Naive thymus-derived CD4-positive, alpha-beta T cell (primary cell): ENCODE measurements at regions of chr1 and their contacts with region 1.

Region 1: GRCh38 chr1:67053785-67054772 is at the start of gene SLC35D1:
- DNase-seq: peak; percentile 65 to 88 (median 76)
- ATAC-seq: peak; percentile 86
- H3K4me3 ChIP-seq: peak within 1 kb of the TSS; percentile 87
- H3K4me3 Mint-ChIP-seq: peak within 1 kb of the TSS; percentile 90 to 97 (median 95)
- H3K27ac ChIP-seq: peak within 1 kb of the TSS; percentile 96
- H3K27ac Mint-ChIP-seq: peak within 1 kb of the TSS; percentile 80 to 99 (median 94)
- H3K4me1 ChIP-seq: peaks cover 6 to 13% of the 10 kb centered on the region in 2 donors
- H3K4me1 Mint-ChIP-seq: peaks cover 17 to 37% (median 30%) of the 10 kb centered on the region in 7 donors
- H3K27me3 ChIP-seq: no peaks in the 10 kb centered on the region
- H3K27me3 Mint-ChIP-seq: peaks cover 0 to 9% (median 0%) of the 10 kb centered on the region in 5 donors
- total RNA-seq, gene SLC35D1: 9.8 to 25.7 (median 15.4) TPM

Region 2: GRCh38 chr1:66764994-66765578 is 289.0 kb before region 1 on chr1:
- CTCF ChIA-PET with region 1: interaction called, 3 read pairs
- POLR2A ChIA-PET with region 1: interaction called, 3 read pairs
- intact Hi-C with region 1: loop called (anchors 1 to 5 kb)
- DNase-seq: peak in 7 of 9 donors; percentile 48 to 68 (median 62)
- ATAC-seq: peak; percentile 81
- H3K4me3 ChIP-seq: no peak overlapping the region
- H3K4me3 Mint-ChIP-seq: no peak overlapping the region
- H3K27ac ChIP-seq: no peak overlapping the region
- H3K27ac Mint-ChIP-seq: no peak overlapping the region
- H3K4me1 ChIP-seq: no peaks in the 10 kb centered on the region
- H3K4me1 Mint-ChIP-seq: peaks cover 7 to 21% (median 15%) of the 10 kb centered on the region in 7 donors
- H3K27me3 ChIP-seq: no peaks in the 10 kb centered on the region
- H3K27me3 Mint-ChIP-seq: peaks cover 0 to 3% (median 0%) of the 10 kb centered on the region in 5 donors

Region 3: GRCh38 chr1:66809736-66810326 is 244.2 kb before region 1 on chr1:
- CTCF ChIA-PET with region 1: no interaction called
- POLR2A ChIA-PET with region 1: no interaction called
- intact Hi-C with region 1: no loop called
- DNase-seq: no peak
- ATAC-seq: no peak
- H3K4me3 ChIP-seq: no peak overlapping the region
- H3K4me3 Mint-ChIP-seq: no peak overlapping the region
- H3K27ac ChIP-seq: no peak overlapping the region
- H3K27ac Mint-ChIP-seq: no peak overlapping the region
- H3K4me1 ChIP-seq: no peaks in the 10 kb centered on the region
- H3K4me1 Mint-ChIP-seq: no peaks in the 10 kb centered on the region
- H3K27me3 ChIP-seq: peaks cover 0 to 1% of the 10 kb centered on the region in 2 donors
- H3K27me3 Mint-ChIP-seq: peaks cover 0 to 8% (median 0%) of the 10 kb centered on the region in 5 donors

Region 4: GRCh38 chr1:66929999-66930822 is 123.9 kb before region 1 on chr1:
- CTCF ChIA-PET with region 1: no interaction called
- POLR2A ChIA-PET with region 1: interaction called, 13 read pairs
- intact Hi-C with region 1: loop called in 1 of 2 experiments (anchors 1 kb)
- DNase-seq: peak; percentile 88 to 97 (median 92)
- ATAC-seq: peak; percentile 88
- H3K4me3 ChIP-seq: peak overlapping the region; percentile 69
- H3K4me3 Mint-ChIP-seq: peak overlapping the region; percentile 85 to 98 (median 92)
- H3K27ac ChIP-seq: peak overlapping the region; percentile 91
- H3K27ac Mint-ChIP-seq: peak overlapping the region; percentile 79 to 95 (median 90)
- H3K4me1 ChIP-seq: peaks cover 45 to 48% of the 10 kb centered on the region in 2 donors
- H3K4me1 Mint-ChIP-seq: peaks cover 38 to 88% (median 70%) of the 10 kb centered on the region in 7 donors
- H3K27me3 ChIP-seq: no peaks in the 10 kb centered on the region
- H3K27me3 Mint-ChIP-seq: no peaks in the 10 kb centered on the region

Region 5: GRCh38 chr1:66996018-66996682 is 57.9 kb before region 1 on chr1:
- CTCF ChIA-PET with region 1: no interaction called
- POLR2A ChIA-PET with region 1: no interaction called
- intact Hi-C with region 1: loop called (anchors 1 kb)
- DNase-seq: peak; percentile 14 to 75 (median 63)
- ATAC-seq: peak; percentile 93
- H3K4me3 ChIP-seq: no peak overlapping the region
- H3K4me3 Mint-ChIP-seq: no peak overlapping the region
- H3K27ac ChIP-seq: no peak overlapping the region
- H3K27ac Mint-ChIP-seq: peak overlapping the region in 5 of 9 donors; percentile 7 to 78 (median 74)
- H3K4me1 ChIP-seq: peaks cover 0 to 5% of the 10 kb centered on the region in 2 donors
- H3K4me1 Mint-ChIP-seq: peaks cover 4 to 24% (median 23%) of the 10 kb centered on the region in 7 donors
- H3K27me3 ChIP-seq: no peaks in the 10 kb centered on the region
- H3K27me3 Mint-ChIP-seq: no peaks in the 10 kb centered on the region

Region 6: GRCh38 chr1:67142931-67143330 is 88.9 kb after region 1 on chr1:
- CTCF ChIA-PET with region 1: interaction called, 8 read pairs
- POLR2A ChIA-PET with region 1: interaction called, 16 read pairs
- intact Hi-C with region 1: loop called (anchors 1 to 2 kb)
- DNase-seq: peak in 7 of 9 donors; percentile 18 to 77 (median 66)
- ATAC-seq: peak; percentile 80
- H3K4me3 ChIP-seq: no peak overlapping the region
- H3K4me3 Mint-ChIP-seq: peak overlapping the region; percentile 9 to 81 (median 52)
- H3K27ac ChIP-seq: peak overlapping the region; percentile 38
- H3K27ac Mint-ChIP-seq: peak overlapping the region; percentile 3 to 95 (median 86)
- H3K4me1 ChIP-seq: peaks cover 10 to 16% of the 10 kb centered on the region in 2 donors
- H3K4me1 Mint-ChIP-seq: peaks cover 23 to 55% (median 44%) of the 10 kb centered on the region in 7 donors
- H3K27me3 ChIP-seq: no peaks in the 10 kb centered on the region
- H3K27me3 Mint-ChIP-seq: peaks cover 0 to 5% (median 0%) of the 10 kb centered on the region in 5 donors

Region 7: GRCh38 chr1:67214420-67215174 is 160.5 kb after region 1 on chr1:
- CTCF ChIA-PET with region 1: interaction called, 4 read pairs
- POLR2A ChIA-PET with region 1: no interaction called
- intact Hi-C with region 1: loop called (anchors 2 kb)
- DNase-seq: peak in 7 of 9 donors; percentile 18 to 58 (median 45)
- ATAC-seq: peak; percentile 57
- H3K4me3 ChIP-seq: no peak overlapping the region
- H3K4me3 Mint-ChIP-seq: no peak overlapping the region
- H3K27ac ChIP-seq: no peak overlapping the region
- H3K27ac Mint-ChIP-seq: peak overlapping the region in 3 of 9 donors; percentile 27 to 77 (median 70)
- H3K4me1 ChIP-seq: peaks cover 0 to 8% of the 10 kb centered on the region in 2 donors
- H3K4me1 Mint-ChIP-seq: peaks cover 14 to 43% (median 23%) of the 10 kb centered on the region in 7 donors
- H3K27me3 ChIP-seq: no peaks in the 10 kb centered on the region
- H3K27me3 Mint-ChIP-seq: no peaks in the 10 kb centered on the region

Region 8: GRCh38 chr1:67239738-67240137 is 185.7 kb after region 1 on chr1:
- CTCF ChIA-PET with region 1: no interaction called
- POLR2A ChIA-PET with region 1: no interaction called
- intact Hi-C with region 1: no loop called
- DNase-seq: no peak
- ATAC-seq: no peak
- H3K4me3 ChIP-seq: no peak overlapping the region
- H3K4me3 Mint-ChIP-seq: no peak overlapping the region
- H3K27ac ChIP-seq: no peak overlapping the region
- H3K27ac Mint-ChIP-seq: no peak overlapping the region
- H3K4me1 ChIP-seq: no peaks in the 10 kb centered on the region
- H3K4me1 Mint-ChIP-seq: peaks cover 0 to 11% (median 0%) of the 10 kb centered on the region in 7 donors
- H3K27me3 ChIP-seq: no peaks in the 10 kb centered on the region
- H3K27me3 Mint-ChIP-seq: no peaks in the 10 kb centered on the region

Region 9: GRCh38 chr1:67339623-67340343 is 285.7 kb after region 1 on chr1:
- CTCF ChIA-PET with region 1: no interaction called
- POLR2A ChIA-PET with region 1: no interaction called
- intact Hi-C with region 1: loop called in 1 of 2 experiments (anchors 10 kb)
- DNase-seq: peak in 1 of 9 donors; percentile 41
- ATAC-seq: no peak
- H3K4me3 ChIP-seq: no peak overlapping the region
- H3K4me3 Mint-ChIP-seq: peak overlapping the region in 3 of 10 donors; percentile 1 to 61 (median 35)
- H3K27ac ChIP-seq: no peak overlapping the region
- H3K27ac Mint-ChIP-seq: peak overlapping the region in 1 of 9 donors; percentile 81
- H3K4me1 ChIP-seq: peaks cover 11 to 24% of the 10 kb centered on the region in 2 donors
- H3K4me1 Mint-ChIP-seq: peaks cover 30 to 81% (median 62%) of the 10 kb centered on the region in 7 donors
- H3K27me3 ChIP-seq: no peaks in the 10 kb centered on the region
- H3K27me3 Mint-ChIP-seq: no peaks in the 10 kb centered on the region